Activated T-helper 2 cell treated with anti-CD3 and anti-CD28 coated beads, Interferon-gamma antibody, Interleukin-2, Interleukin-4, amounts not matched to agents 10 μg/mL and 5 μg/mL and 100 μg/mL, durations not matched to agents 14 hours and 24 hours and 36 hours (primary cell): ENCODE measurements at regions of chr18 and their contacts with region 1.

Region 1: DNA sequence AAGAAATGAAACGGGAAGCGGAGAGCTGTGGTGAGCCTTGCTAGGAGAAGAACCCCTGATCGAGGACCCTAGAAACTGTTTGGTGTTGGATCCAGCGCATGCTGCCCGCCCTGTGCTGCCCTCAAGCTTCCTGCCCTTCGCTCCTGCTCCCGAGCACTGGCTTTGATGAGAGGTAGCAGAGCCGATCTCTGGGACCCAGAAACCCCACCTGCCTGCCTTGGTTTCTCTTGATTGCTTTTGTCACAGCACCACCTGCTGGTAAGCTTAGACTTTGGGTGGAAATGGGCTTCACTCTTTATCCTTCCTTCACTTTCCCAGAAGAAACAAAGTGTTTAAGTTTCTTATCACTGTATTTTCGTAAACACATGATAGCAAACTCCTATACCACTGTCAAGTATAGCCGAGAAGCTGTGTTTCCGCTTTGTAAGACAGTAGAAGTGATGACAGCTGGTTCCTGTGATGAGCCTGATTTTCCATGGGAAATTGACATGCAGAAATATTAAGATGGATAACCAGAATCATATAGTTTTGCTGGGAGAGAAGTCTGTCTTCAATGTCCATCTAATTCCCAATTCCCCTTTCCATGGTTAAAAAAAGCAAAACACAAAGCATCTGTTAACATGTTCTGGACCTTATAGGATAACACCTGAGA is 267.4 kb downstream of the PHLPP1 start:
- DNase-seq: peak; percentile 42
- H3K4me3 Mint-ChIP-seq: no peak overlapping the region
- H3K27ac Mint-ChIP-seq: no peak overlapping the region
- H3K4me1 Mint-ChIP-seq: peaks cover 4% of the 10 kb centered on the region
- H3K27me3 Mint-ChIP-seq: no peaks in the 10 kb centered on the region

Region 2: GRCh38 chr18:62637807-62638687 is 344.7 kb before region 1 on chr18:
- intact Hi-C with region 1: loop called (anchors 1 kb)
- DNase-seq: peak; percentile 32
- H3K4me3 Mint-ChIP-seq: no peak overlapping the region
- H3K27ac Mint-ChIP-seq: peak overlapping the region; percentile 33
- H3K4me1 Mint-ChIP-seq: peaks cover 8% of the 10 kb centered on the region
- H3K27me3 Mint-ChIP-seq: peaks cover 20% of the 10 kb centered on the region

Region 3: GRCh38 chr18:62999392-62999791 is 16.7 kb after region 1 on chr18:
- intact Hi-C with region 1: no loop called
- DNase-seq: no peak
- H3K4me3 Mint-ChIP-seq: no peak overlapping the region
- H3K27ac Mint-ChIP-seq: no peak overlapping the region
- H3K4me1 Mint-ChIP-seq: no peaks in the 10 kb centered on the region
- H3K27me3 Mint-ChIP-seq: peaks cover 7% of the 10 kb centered on the region